Prostate gland (tissue), 2 donors: ENCODE measurements at regions of chr20 and their contacts with region 1.

Region 1: DNA sequence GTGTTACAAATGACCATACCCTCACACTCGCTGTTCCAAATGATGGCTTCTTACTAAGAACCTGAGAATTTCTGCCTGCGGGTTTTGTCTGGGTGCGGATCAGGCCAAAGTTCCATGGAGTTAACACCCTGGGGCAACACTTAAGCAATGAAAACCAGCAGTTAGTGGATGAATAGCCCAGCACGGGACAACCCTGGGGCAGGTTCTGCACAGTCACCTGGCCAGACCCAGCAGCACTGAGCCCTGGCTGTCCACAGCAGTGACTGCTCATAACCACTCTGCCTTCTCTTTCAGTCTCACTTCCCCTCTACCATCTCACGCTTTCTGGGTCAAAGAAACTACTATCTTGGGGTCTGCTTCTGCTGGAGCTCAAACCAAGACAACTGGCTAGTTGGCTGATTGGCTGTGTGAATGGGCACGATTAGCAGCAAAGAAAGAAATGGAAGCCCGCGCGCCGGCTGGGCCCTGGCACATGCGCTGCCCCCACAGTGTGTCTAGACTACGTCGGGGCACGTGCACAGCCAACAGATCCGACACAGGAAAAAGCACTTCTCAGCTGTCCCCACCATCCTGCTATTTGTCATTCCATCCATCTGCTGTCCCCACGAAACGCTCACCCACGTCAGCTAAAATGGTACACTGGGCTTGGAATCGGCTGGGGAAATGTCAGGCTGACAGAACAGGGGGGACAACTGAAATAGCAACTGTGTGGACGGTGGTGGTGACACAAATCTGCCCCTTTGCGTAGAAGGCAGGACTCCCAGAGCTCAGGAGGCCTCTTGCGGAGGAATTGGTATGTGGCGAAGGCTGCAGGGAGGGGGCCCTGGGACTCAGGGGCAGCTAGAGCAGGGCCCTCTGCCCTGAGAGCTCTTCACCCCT is 36.7 kb downstream of the MGME1 start:
- DNase-seq: no peak
- H3K4me3 ChIP-seq: no peak overlapping the region
- H3K27ac ChIP-seq: peak overlapping the region; percentile 43 to 47
- H3K4me1 ChIP-seq: no peaks in the 10 kb centered on the region
- H3K27me3 ChIP-seq: no peaks in the 10 kb centered on the region
- CTCF ChIP-seq: no peak
- POLR2A ChIP-seq: no peak

Region 2: GRCh38 chr20:18137412-18138265 is 132.2 kb after region 1 on chr20 and contains the starts of genes KAT14 and PET117:
- intact Hi-C with region 1: loop called (anchors 10 kb)
- DNase-seq: peak; percentile 82
- H3K4me3 ChIP-seq: peak within 1 kb of the TSS; percentile 69 to 90
- H3K27ac ChIP-seq: peak within 1 kb of the TSS; percentile 79 to 87
- H3K4me1 ChIP-seq: no peaks in the 10 kb centered on the region
- H3K27me3 ChIP-seq: no peaks in the 10 kb centered on the region
- CTCF ChIP-seq: peak in 2 of 4 experiments; percentile 12 to 32
- POLR2A ChIP-seq: peak; percentile 37
- total RNA-seq, gene KAT14: 15.2 to 23.3 TPM
- total RNA-seq, gene PET117: 17.6 to 19.2 TPM